ENCODE measurements at regions of chr9 and their contacts with region 1.

Region 1: DNA sequence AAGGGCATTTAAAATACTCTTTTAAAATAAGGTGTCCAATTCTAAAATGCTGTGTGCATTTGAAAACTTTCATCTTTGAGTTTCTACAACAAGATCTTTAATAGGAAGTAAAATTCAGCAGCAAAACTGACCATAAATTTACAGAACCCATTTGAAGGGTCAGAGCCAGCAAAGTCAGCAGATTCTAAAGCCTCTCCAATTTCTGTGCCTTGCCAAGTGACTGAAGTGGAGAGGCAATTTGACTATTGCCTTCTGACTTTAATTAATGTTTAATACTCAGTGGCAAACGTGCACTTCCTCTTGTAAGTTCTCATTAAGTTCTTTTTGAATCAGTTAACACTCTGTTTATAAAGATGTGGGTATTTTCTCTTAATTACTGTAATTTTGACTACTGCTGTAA is 155.2 kb downstream of the BAAT start:
- DNase-seq: no peak
- ATAC-seq: no peak
- H3K4me3 ChIP-seq: no peak overlapping the region
- H3K27ac ChIP-seq: no peak overlapping the region
- H3K4me1 ChIP-seq: no peaks in the 10 kb centered on the region
- H3K27me3 ChIP-seq: peaks cover 0 to 4% (median 0%) of the 10 kb centered on the region in 7 donors
- CTCF ChIP-seq: no peak

Region 2: DNA sequence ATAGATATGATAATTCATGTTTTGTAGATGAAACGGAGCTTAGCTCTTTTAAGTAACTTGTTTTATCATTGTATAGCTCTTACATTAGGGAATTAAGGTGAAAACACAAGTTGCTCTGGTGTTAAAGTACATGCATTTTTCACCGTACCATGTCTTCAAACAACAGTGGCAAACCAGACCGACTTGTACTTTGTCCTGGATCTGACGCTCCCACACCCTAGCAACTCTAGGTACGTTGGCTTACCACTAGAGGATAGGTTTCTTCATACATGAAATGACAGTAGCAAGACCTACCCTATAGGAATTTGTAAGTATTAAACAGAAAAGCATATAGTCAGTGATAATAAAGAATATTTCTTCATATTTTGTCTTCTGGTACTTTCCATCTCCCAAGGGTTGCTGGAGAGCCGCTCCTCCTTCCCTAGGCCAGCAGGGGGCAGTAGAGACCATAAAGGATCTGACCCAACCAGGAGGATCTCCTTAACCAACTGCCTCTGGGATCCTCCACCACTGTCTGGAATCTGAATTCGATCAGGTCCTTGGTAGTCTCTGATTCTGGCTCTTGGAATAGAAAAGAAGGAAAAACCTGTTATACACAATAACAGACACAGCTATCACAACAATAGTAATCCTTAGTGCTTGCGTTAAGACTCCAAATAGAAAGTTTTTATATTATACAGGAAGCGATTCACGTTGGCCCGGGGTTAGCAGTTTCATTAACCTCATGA is 515.1 kb before region 1 on chr9:
- intact Hi-C with region 1: loop called in 7 of 10 experiments (anchors 5 to 10 kb)
- DNase-seq: peak; percentile 25 to 69
- ATAC-seq: peak in 5 of 8 donors; percentile 46 to 62 (median 58)
- H3K4me3 ChIP-seq: peak overlapping the region in 3 of 10 donors; percentile 9 to 15 (median 11)
- H3K27ac ChIP-seq: no peak overlapping the region
- H3K4me1 ChIP-seq: no peaks in the 10 kb centered on the region
- H3K27me3 ChIP-seq: peaks cover 0 to 21% (median 7%) of the 10 kb centered on the region in 7 donors
- CTCF ChIP-seq: peak; percentile 46 to 92 (median 84)

Region 3: DNA sequence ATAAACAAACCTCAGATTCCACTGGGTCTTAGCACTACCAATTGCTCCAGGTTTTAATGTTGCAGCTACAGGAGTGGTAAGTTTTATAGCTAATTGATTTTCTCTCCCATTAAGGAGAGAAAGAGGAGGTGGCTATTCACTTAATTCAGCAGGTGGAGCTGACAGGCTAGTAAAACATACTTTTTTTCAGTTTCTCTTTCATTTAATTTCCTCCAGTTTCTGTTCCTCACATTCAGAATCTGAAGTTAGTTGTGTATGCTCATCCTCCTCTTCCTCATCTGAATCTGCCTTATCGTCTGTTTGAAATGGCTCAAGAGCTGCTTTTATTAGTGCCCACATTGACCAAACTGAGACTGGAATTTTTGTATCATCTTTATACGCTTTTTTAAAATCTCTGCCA is 103.0 kb before region 1 on chr9:
- intact Hi-C with region 1: loop called in 3 of 10 experiments (anchors 2 to 10 kb)
- DNase-seq: no peak
- ATAC-seq: no peak
- H3K4me3 ChIP-seq: no peak overlapping the region
- H3K27ac ChIP-seq: no peak overlapping the region
- H3K4me1 ChIP-seq: no peaks in the 10 kb centered on the region
- H3K27me3 ChIP-seq: no peaks in the 10 kb centered on the region
- CTCF ChIP-seq: no peak

Region 4: GRCh38 chr9:101162231-101162630 is 67.4 kb before region 1 on chr9:
- intact Hi-C with region 1: loop called in 1 of 10 experiments (anchors 10 kb)
- DNase-seq: no peak
- ATAC-seq: no peak
- H3K4me3 ChIP-seq: no peak overlapping the region
- H3K27ac ChIP-seq: no peak overlapping the region
- H3K4me1 ChIP-seq: no peaks in the 10 kb centered on the region
- H3K27me3 ChIP-seq: no peaks in the 10 kb centered on the region
- CTCF ChIP-seq: no peak

Region 5: GRCh38 chr9:102445181-102445747 is 1215.7 kb after region 1 on chr9:
- intact Hi-C with region 1: no loop called
- DNase-seq: no peak
- ATAC-seq: no peak
- H3K4me3 ChIP-seq: no peak overlapping the region
- H3K27ac ChIP-seq: no peak overlapping the region
- H3K4me1 ChIP-seq: no peaks in the 10 kb centered on the region
- H3K27me3 ChIP-seq: no peaks in the 10 kb centered on the region
- CTCF ChIP-seq: no peak